ENCODE measurements at regions of chr20 and their contacts with region 1.

Region 1: GRCh38 chr20:44609511-44610312 is 27.3 kb downstream of the PKIG start:
- DNase-seq: no peak
- ATAC-seq: peak; percentile 98
- H3K4me3 ChIP-seq: no peak overlapping the region
- H3K27ac ChIP-seq: peak overlapping the region; percentile 57
- H3K4me1 ChIP-seq: peaks cover 13% of the 10 kb centered on the region
- H3K27me3 ChIP-seq: no peaks in the 10 kb centered on the region
- CTCF ChIP-seq: peak; percentile 98 to 99 (median 99); a peak in 5 of 6 replicates
- EP300 ChIP-seq: no peak
- POLR2A ChIP-seq: no peak
- RAD21 ChIP-seq: peak; percentile 99

Region 2: GRCh38 chr20:43776643-43777042 is 833.1 kb before region 1 on chr20:
- CTCF ChIA-PET with region 1: no interaction called
- POLR2A ChIA-PET with region 1: no interaction called
- RAD21 ChIA-PET with region 1: no interaction called
- SMC1A ChIA-PET with region 1: no interaction called
- in situ Hi-C with region 1: no loop called
- intact Hi-C with region 1: no loop called
- DNase-seq: no peak
- ATAC-seq: no peak
- H3K4me3 ChIP-seq: no peak overlapping the region
- H3K27ac ChIP-seq: no peak overlapping the region
- H3K4me1 ChIP-seq: no peaks in the 10 kb centered on the region
- H3K27me3 ChIP-seq: 0 out of 4 replicates have a peak, but pooled peaks cover 0 to 2% of the 10 kb centered on the region in 2 experiments
- CTCF ChIP-seq: no peak
- EP300 ChIP-seq: no peak
- POLR2A ChIP-seq: no peak
- RAD21 ChIP-seq: no peak

Region 3: DNA sequence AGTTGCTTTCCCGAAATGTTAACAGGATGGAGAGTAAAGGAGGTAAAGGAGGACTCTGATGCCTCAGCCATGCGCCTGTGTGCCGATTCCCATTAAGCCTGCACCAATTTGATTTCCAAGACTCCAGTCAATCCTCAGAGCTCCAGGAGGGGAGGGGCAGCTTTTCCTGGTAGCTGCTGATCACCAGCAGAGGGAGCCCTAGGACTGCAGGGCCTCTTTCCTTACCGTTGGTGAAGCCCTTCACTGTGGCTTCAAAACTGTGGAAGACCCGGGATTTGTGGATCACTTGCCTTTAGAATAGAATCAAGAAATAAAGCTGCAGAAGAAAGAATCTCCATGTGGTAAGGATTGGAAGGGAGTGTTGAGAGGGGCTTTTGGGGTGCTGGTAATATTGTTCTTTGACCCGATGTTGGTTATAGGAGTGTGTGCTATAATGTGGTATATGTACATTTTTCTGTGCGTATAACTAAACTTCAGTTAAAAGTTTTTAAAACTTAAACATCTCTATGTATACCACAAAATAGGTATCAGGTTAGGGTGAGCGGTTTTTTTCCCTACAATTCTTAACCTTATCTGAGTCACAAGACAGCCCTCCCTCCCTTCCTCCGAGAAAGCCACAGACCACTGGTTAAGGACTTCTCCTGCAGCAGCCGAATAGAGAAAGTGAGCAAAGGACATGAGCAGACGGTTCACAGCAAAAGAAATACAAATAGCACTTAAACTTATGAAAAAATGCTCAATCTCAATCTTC is 392.2 kb before region 1 on chr20:
- CTCF ChIA-PET with region 1: interaction called, 4 read pairs
- POLR2A ChIA-PET with region 1: no interaction called
- RAD21 ChIA-PET with region 1: no interaction called
- SMC1A ChIA-PET with region 1: no interaction called
- in situ Hi-C with region 1: loop called (anchors 10 kb)
- intact Hi-C with region 1: loop called (anchors 1 kb)
- DNase-seq: no peak
- ATAC-seq: peak; percentile 80
- H3K4me3 ChIP-seq: no peak overlapping the region
- H3K27ac ChIP-seq: no peak overlapping the region
- H3K4me1 ChIP-seq: peaks cover 14% of the 10 kb centered on the region
- H3K27me3 ChIP-seq: no peaks in the 10 kb centered on the region
- CTCF ChIP-seq: peak; percentile 92 to 97 (median 94)
- EP300 ChIP-seq: no peak
- POLR2A ChIP-seq: no peak
- RAD21 ChIP-seq: peak; percentile 98

Region 4: GRCh38 chr20:44475694-44476560 is 133.8 kb before region 1 on chr20 and contains the start of gene TTPAL:
- CTCF ChIA-PET with region 1: interaction called, 11 read pairs
- POLR2A ChIA-PET with region 1: no interaction called
- RAD21 ChIA-PET with region 1: interaction called, 14 read pairs
- SMC1A ChIA-PET with region 1: interaction called, 7 read pairs
- in situ Hi-C with region 1: no loop called
- intact Hi-C with region 1: loop called (anchors 5 kb)
- DNase-seq: peak; percentile 68
- ATAC-seq: peak; percentile 97
- H3K4me3 ChIP-seq: peak within 1 kb of the TSS; percentile 75
- H3K27ac ChIP-seq: peak within 1 kb of the TSS; percentile 90
- H3K4me1 ChIP-seq: no peaks in the 10 kb centered on the region; the same call in 1 of the 2 replicates
- H3K27me3 ChIP-seq: no peaks in the 10 kb centered on the region
- CTCF ChIP-seq: peak; percentile 11 to 60 (median 17); a peak in 3 of 6 replicates
- EP300 ChIP-seq: no peak
- POLR2A ChIP-seq: peak; percentile 100
- RAD21 ChIP-seq: peak; percentile 32; the same call in 1 of the 2 replicates
- polyA plus RNA-seq, gene TTPAL: 4.0 to 4.3 TPM

Region 5: GRCh38 chr20:44576297-44576696 is 33.4 kb before region 1 on chr20:
- CTCF ChIA-PET with region 1: interaction called, 158 read pairs
- POLR2A ChIA-PET with region 1: interaction called, 9 read pairs
- RAD21 ChIA-PET with region 1: interaction called, 97 read pairs
- SMC1A ChIA-PET with region 1: interaction called, 85 read pairs
- in situ Hi-C with region 1: no loop called
- intact Hi-C with region 1: loop called (anchors 1 kb)
- DNase-seq: no peak
- ATAC-seq: peak; percentile 86
- H3K4me3 ChIP-seq: no peak overlapping the region
- H3K27ac ChIP-seq: no peak overlapping the region
- H3K4me1 ChIP-seq: peaks cover 27% of the 10 kb centered on the region
- H3K27me3 ChIP-seq: no peaks in the 10 kb centered on the region
- CTCF ChIP-seq: peak; percentile 51 to 64 (median 59)
- EP300 ChIP-seq: no peak
- POLR2A ChIP-seq: no peak
- RAD21 ChIP-seq: peak; percentile 77

Region 6: DNA sequence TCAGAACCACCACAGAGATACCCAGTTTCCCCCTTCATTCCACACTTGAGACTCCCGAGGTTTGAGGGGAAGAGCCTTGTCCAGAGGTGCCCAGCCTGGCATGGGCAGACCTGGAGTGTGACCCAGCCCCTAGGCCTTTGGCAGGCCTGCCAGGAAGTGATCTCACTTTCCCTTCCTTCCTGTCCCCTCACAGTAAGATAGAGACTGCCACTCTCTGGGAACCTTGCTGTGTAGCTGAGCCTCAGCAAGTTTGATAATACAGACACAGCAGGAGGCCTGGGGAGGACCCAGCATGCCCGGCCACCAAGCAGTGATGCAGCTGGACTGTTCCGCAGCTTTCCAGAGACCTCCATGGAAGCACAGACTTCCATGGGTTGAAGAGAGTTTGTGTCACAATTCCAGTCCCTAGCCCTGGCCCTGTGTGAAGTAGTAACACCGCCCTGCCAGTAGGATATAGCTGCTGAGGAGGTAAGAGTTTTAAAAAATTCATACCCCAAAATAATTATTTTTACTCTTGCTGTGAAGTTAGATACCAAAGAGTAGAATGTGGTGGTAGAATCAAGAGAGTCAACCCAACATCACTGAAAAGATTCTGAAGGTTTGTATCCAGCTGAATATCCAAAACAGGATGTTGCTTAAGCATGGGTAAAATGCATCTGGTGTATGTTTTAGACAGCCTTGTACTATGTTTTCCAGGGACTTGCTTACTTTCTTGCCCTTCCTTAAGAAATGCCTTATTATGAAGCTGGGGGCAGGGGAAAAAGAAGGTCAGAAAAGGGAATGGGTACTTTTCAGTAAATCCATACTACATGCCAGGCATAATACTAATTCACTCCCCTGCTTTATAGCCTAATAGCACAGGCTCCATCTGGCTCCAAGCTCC is 11.0 kb before region 1 on chr20:
- CTCF ChIA-PET with region 1: interaction called, 38 read pairs
- POLR2A ChIA-PET with region 1: no interaction called
- RAD21 ChIA-PET with region 1: interaction called, 12 read pairs
- SMC1A ChIA-PET with region 1: interaction called, 42 read pairs
- in situ Hi-C with region 1: no loop called
- intact Hi-C with region 1: no loop called
- DNase-seq: no peak
- ATAC-seq: peak; percentile 75
- H3K4me3 ChIP-seq: peak overlapping the region; percentile 28; the same call in 1 of the 2 replicates
- H3K27ac ChIP-seq: peak overlapping the region; percentile 0
- H3K4me1 ChIP-seq: peaks cover 25% of the 10 kb centered on the region
- H3K27me3 ChIP-seq: no peaks in the 10 kb centered on the region
- CTCF ChIP-seq: peak; percentile 12 to 25 (median 17); a peak in 3 of 6 replicates
- EP300 ChIP-seq: no peak
- POLR2A ChIP-seq: peak; percentile 58
- RAD21 ChIP-seq: peak; percentile 46; the same call in 1 of the 2 replicates

Region 7: DNA sequence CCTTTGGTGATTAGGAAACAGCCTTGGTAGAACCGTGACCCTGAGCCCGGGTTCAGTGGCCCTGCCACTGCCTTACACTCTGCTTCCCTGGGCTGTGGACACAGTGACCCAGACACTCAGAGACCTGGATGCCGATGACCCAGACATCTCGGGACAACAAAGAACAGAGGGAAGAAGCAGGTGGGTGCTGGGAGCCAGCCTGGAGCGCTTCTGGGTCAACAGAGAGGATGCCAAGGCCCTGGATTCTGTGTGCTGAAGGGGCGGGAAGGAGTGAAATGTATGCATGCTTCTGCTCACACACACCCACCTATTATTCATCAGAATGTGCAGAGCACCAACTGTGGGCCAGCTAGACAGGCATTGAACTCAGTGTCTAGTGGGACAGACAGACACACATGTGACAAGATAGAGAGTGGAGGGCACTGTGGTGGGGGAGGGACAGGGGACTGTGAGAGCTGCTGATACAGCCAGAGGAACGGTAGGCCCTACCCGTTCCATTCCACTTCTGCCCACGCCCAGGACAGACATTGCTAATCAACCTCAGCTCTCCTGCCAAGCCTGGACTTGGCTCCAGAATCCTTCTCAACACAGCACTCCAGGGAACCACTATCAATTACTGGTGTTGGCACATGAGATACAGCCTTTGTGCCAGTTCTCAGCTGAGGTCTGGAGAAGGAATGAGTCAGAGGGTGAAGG is 156.1 kb after region 1 on chr20:
- CTCF ChIA-PET with region 1: no interaction called
- POLR2A ChIA-PET with region 1: no interaction called
- RAD21 ChIA-PET with region 1: no interaction called
- SMC1A ChIA-PET with region 1: no interaction called
- in situ Hi-C with region 1: no loop called
- intact Hi-C with region 1: no loop called
- DNase-seq: no peak
- ATAC-seq: no peak
- H3K4me3 ChIP-seq: no peak overlapping the region
- H3K27ac ChIP-seq: no peak overlapping the region
- H3K4me1 ChIP-seq: no peaks in the 10 kb centered on the region; the same call in 1 of the 2 replicates
- H3K27me3 ChIP-seq: no peaks in the 10 kb centered on the region
- CTCF ChIP-seq: no peak
- EP300 ChIP-seq: no peak
- POLR2A ChIP-seq: no peak
- RAD21 ChIP-seq: no peak